HEK293 (cell line): ENCODE measurements at regions of chr14 and their contacts with region 1.

Region 1: GRCh38 chr14:77376771-77377501 is at the starts of genes SAMD15 and TMED8:
- H3K4me3 ChIP-seq: peak within 1 kb of the TSS; percentile 85
- H3K27ac ChIP-seq: peak within 1 kb of the TSS; percentile 87
- H3K4me1 ChIP-seq: peaks cover 19% of the 10 kb centered on the region
- CTCF ChIP-seq: peak; percentile 37; the same call in 1 of the 2 replicates

Region 2: GRCh38 chr14:77554207-77554606 is 177.3 kb after region 1 on chr14:
- CTCF ChIA-PET with region 1: no interaction called
- POLR2A ChIA-PET with region 1: no interaction called
- H3K4me3 ChIP-seq: no peak overlapping the region
- H3K27ac ChIP-seq: no peak overlapping the region
- H3K4me1 ChIP-seq: no peaks in the 10 kb centered on the region
- CTCF ChIP-seq: no peak

Region 3: GRCh38 chr14:78581229-78581628 is 1204.3 kb after region 1 on chr14:
- CTCF ChIA-PET with region 1: no interaction called
- POLR2A ChIA-PET with region 1: interaction called, 10 read pairs
- H3K4me3 ChIP-seq: no peak overlapping the region
- H3K27ac ChIP-seq: no peak overlapping the region
- H3K4me1 ChIP-seq: no peaks in the 10 kb centered on the region
- CTCF ChIP-seq: no peak